Activated CD4-positive, alpha-beta T cell treated with anti-CD3 and anti-CD28 coated beads for 36 hours (primary cell): ENCODE measurements at regions of chr6 and their contacts with region 1.

Region 1: DNA sequence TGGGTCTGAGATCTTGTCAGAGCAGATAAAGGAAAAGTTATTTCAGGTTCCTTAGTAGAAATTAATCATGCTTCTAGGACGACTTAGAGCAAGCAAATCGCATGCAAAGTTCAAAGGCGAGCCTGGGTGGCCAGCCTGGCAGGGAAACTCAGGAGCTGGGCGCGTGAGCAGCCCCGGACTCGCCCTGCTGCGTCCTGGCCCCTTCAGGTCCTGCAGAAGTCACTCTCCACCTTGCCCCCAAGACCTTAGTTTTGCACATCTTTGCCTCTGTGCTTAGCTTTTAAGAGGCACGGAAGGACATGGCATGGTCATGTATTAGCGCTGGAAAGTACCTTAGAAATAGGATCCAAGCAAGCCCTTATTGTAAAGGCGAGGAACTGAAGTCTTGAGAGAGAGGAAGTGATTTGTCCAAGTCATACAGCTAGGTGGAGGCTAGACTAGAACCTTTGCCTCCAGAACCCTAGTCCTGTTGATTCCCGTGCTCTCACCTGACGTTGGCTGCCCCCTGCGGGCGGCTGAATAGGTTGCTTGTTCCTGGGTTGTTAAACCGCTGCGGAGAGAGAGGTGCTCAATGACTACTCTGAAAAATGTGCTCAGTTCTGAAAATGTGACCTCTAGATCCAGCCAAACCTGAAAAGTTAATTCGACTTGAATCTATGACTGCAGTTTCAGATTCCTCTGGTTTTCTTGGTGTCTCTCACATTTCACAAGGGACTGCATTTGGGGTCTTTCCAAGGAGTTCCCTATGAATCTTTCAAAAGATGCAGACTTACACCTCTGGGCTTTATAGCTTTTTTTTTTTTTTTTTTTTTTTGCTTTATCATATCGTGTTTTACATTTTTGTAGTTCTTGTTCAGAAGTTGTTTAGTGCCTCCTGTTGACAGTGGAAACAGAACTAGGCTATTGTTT is 2.7 kb downstream of the MYB start:
- DNase-seq: peak; percentile 92
- ATAC-seq: peak; percentile 55
- H3K4me3 Mint-ChIP-seq: peak overlapping the region; percentile 91
- H3K27ac Mint-ChIP-seq: peak overlapping the region; percentile 93
- H3K4me1 Mint-ChIP-seq: peaks cover 26% of the 10 kb centered on the region
- H3K27me3 Mint-ChIP-seq: no peaks in the 10 kb centered on the region

Region 2: GRCh38 chr6:133952815-133953633 is 1230.8 kb before region 1 on chr6 and contains the start of gene TBPL1:
- CTCF ChIA-PET with region 1: no interaction called
- POLR2A ChIA-PET with region 1: no interaction called
- intact Hi-C with region 1: loop called in 1 of 2 experiments (anchors 5 kb)
- DNase-seq: peak; percentile 92
- ATAC-seq: peak; percentile 90
- H3K4me3 Mint-ChIP-seq: peak within 1 kb of the TSS; percentile 98
- H3K27ac Mint-ChIP-seq: peak within 1 kb of the TSS; percentile 93
- H3K4me1 Mint-ChIP-seq: peaks cover 38% of the 10 kb centered on the region
- H3K27me3 Mint-ChIP-seq: no peaks in the 10 kb centered on the region
- total RNA-seq, gene TBPL1: 32.2 to 33.9 TPM

Region 3: GRCh38 chr6:134979142-134979541 is 204.6 kb before region 1 on chr6:
- CTCF ChIA-PET with region 1: interaction called, 5 read pairs
- POLR2A ChIA-PET with region 1: no interaction called
- intact Hi-C with region 1: loop called (anchors 1 to 2 kb)
- DNase-seq: peak; percentile 75
- ATAC-seq: peak; percentile 92
- H3K4me3 Mint-ChIP-seq: no peak overlapping the region
- H3K27ac Mint-ChIP-seq: peak overlapping the region; percentile 39
- H3K4me1 Mint-ChIP-seq: peaks cover 48% of the 10 kb centered on the region
- H3K27me3 Mint-ChIP-seq: no peaks in the 10 kb centered on the region

Region 4: DNA sequence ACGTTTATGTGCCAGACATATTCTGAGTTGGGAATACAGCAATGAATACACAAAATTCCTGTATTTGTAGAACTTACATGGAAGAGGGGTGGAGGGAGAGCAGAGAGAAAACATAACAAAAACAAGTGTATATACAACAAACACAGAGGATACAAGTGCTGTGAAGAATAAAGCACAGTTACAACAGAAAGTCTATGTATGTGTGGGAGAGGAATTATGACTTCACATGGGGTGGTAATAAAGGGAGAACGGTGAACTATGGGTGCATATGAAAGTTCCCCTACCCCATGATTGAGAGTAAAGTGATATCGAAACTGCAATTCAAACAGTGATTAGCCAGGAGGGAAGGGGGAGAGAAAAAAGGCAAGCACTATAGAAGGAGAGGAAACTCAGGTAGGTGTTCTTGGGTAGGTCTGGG is 153.7 kb before region 1 on chr6:
- CTCF ChIA-PET with region 1: interaction called, 4 read pairs
- POLR2A ChIA-PET with region 1: no interaction called
- intact Hi-C with region 1: loop called (anchors 1 to 5 kb)
- DNase-seq: no peak
- ATAC-seq: peak; percentile 97
- H3K4me3 Mint-ChIP-seq: peak overlapping the region; percentile 54
- H3K27ac Mint-ChIP-seq: peak overlapping the region; percentile 75
- H3K4me1 Mint-ChIP-seq: peaks cover 69% of the 10 kb centered on the region
- H3K27me3 Mint-ChIP-seq: no peaks in the 10 kb centered on the region

Region 5: DNA sequence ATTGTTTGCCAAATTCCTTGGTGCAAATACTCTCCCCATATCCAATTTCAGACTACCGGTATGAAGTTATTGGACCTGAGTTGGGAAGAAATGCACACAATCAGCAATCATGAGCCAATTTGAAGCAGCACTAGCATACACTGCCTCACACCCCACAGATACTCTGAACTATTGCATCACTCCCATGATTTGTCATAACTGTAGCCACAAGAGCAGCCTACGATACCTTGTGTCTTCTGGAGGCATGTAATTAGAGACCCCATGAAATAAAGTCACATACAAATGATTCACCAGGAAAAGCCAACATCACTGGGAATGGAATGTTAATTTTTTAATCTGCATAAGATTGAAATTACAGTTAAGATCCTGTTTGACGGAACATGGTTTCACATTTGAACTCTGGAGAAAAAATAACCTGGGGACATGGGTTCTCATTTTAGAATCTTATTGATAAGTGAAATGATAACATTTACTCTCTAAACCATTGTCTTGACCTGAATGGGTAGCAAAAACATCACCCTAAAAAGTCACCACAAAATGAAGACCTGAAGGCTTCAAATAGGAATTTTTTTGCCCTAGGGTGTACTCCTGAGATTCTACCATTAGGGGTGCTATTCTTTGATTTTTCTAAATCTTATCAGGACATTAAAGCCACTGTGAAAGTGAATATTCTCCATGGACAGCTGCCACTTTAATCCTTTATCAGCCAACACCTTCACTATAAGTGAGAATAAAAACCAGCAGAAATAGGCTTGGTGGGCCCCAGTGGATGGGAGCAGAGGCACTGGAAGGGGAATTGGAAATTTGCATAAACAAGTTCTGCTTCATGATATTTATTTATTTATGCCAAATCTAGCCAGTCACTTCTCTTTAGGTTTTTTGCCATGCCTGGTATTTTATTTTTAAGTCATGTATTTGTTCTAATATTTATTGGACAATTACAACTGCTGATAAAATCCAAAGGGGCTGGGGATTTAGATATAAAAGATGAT is 94.7 kb before region 1 on chr6:
- CTCF ChIA-PET with region 1: interaction called, 18 read pairs
- POLR2A ChIA-PET with region 1: interaction called, 6 read pairs
- intact Hi-C with region 1: loop called (anchors 1 kb)
- DNase-seq: peak; percentile 54
- ATAC-seq: peak; percentile 77
- H3K4me3 Mint-ChIP-seq: peak overlapping the region; percentile 48
- H3K27ac Mint-ChIP-seq: peak overlapping the region; percentile 93
- H3K4me1 Mint-ChIP-seq: peaks cover 86% of the 10 kb centered on the region
- H3K27me3 Mint-ChIP-seq: no peaks in the 10 kb centered on the region

Region 6: GRCh38 chr6:135145063-135145800 is 38.6 kb before region 1 on chr6:
- CTCF ChIA-PET with region 1: interaction called, 19 read pairs
- POLR2A ChIA-PET with region 1: interaction called, 4 read pairs
- intact Hi-C with region 1: loop called (anchors 1 kb)
- DNase-seq: no peak
- ATAC-seq: peak; percentile 52
- H3K4me3 Mint-ChIP-seq: peak overlapping the region; percentile 2
- H3K27ac Mint-ChIP-seq: peak overlapping the region; percentile 88
- H3K4me1 Mint-ChIP-seq: peaks cover 65% of the 10 kb centered on the region
- H3K27me3 Mint-ChIP-seq: no peaks in the 10 kb centered on the region

Region 7: DNA sequence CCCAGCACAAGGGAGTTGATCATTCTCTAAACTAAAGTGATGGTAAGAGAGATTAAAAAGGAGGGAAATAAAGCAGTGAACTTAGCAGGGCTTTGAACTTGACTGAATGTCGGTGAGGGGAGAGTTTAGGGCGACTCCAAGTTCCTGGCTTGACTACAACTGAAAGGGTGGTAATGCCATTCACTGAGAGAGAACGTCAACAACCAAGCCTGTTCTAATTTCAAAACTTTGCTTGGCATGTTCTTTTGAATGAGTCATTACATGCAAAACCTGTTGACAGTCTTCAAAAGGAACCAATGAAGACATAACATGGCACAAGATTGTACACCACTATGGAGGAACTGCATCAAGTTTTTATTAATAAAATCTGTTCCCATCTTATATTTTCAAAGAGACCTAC is 12.9 kb before region 1 on chr6:
- CTCF ChIA-PET with region 1: interaction called, 3 read pairs
- POLR2A ChIA-PET with region 1: interaction called, 3 read pairs
- intact Hi-C with region 1: loop called (anchors 1 kb)
- DNase-seq: peak; percentile 63
- ATAC-seq: peak; percentile 89
- H3K4me3 Mint-ChIP-seq: peak overlapping the region; percentile 20
- H3K27ac Mint-ChIP-seq: peak overlapping the region; percentile 88
- H3K4me1 Mint-ChIP-seq: peaks cover 25% of the 10 kb centered on the region
- H3K27me3 Mint-ChIP-seq: no peaks in the 10 kb centered on the region

Region 8: DNA sequence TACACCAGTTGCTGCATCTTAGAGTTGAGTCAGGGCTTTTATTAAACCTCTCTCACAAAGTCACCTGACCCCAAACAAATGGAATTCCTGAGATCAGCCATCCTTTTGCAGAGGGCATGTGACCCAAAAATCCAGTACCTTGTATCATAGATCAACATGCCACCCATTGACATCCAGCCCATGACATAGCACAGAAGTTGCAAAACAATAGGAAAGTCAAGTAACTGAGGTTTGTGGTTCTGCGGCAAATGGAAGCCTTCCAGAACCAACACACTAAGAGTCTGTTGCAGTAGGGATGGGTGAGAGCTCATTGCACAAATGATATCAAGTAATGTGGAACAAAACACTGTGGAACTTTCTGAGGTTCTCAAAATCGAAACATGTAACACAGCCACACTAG is 778.9 kb after region 1 on chr6:
- CTCF ChIA-PET with region 1: no interaction called
- POLR2A ChIA-PET with region 1: no interaction called
- intact Hi-C with region 1: no loop called
- DNase-seq: no peak
- ATAC-seq: no peak
- H3K4me3 Mint-ChIP-seq: no peak overlapping the region
- H3K27ac Mint-ChIP-seq: no peak overlapping the region
- H3K4me1 Mint-ChIP-seq: no peaks in the 10 kb centered on the region
- H3K27me3 Mint-ChIP-seq: no peaks in the 10 kb centered on the region